Activated CD4-positive, alpha-beta memory T cell treated with anti-CD3 and anti-CD28 coated beads for 36 hours (primary cell): ENCODE measurements at regions of chr10 and their contacts with region 1.

Region 1: GRCh38 chr10:27241652-27242472 is 1.3 kb upstream of the ACBD5 start:
- DNase-seq: peak; percentile 93
- H3K4me3 Mint-ChIP-seq: peak overlapping the region; percentile 97
- H3K27ac Mint-ChIP-seq: peak overlapping the region; percentile 100
- H3K4me1 Mint-ChIP-seq: peaks cover 24% of the 10 kb centered on the region
- H3K27me3 Mint-ChIP-seq: no peaks in the 10 kb centered on the region

Region 2: GRCh38 chr10:26437637-26438461 is 804.0 kb before region 1 on chr10 and contains the start of gene APBB1IP:
- CTCF ChIA-PET with region 1: no interaction called
- POLR2A ChIA-PET with region 1: no interaction called
- intact Hi-C with region 1: loop called (anchors 5 kb)
- DNase-seq: peak; percentile 66
- H3K4me3 Mint-ChIP-seq: peak within 1 kb of the TSS; percentile 93
- H3K27ac Mint-ChIP-seq: peak within 1 kb of the TSS; percentile 92
- H3K4me1 Mint-ChIP-seq: peaks cover 51% of the 10 kb centered on the region
- H3K27me3 Mint-ChIP-seq: no peaks in the 10 kb centered on the region
- total RNA-seq, gene APBB1IP: 50.1 to 52.1 TPM

Region 3: DNA sequence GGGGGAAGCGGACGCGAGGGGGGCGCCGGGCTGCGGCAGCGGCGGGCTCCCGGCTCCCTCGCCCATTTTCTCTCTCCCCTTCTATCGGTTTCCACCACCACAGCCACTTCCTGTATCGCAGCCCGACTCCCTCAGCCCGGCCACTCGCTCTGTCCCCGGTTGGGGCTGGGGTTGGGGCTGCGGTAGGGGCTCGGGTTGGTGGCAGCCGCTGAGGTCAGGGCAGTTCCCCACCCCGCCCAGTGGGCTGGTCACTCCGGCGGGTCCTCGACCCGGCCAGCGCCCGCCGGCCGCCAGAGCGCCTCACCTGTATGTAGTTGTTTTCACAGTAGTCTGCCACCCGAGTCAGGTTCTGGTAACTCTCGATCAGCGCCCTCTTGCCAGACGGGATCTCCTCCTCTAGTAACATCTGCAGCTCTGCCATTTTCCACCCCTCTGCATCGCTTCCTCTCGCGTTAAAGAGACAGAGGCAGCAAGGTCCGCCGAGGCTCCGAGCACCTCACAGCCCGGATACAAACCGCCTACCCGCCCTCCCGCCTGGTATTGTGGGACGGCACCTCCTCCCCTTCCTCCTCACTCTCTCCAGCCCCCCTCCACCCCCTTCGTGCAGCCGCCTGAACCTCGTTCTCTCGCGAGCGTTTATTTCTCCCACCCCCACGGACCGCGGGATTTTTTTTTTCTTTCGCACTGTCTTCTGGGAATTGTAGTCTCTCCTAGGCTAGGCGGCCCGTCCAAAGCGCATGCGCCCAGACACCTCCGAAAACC is 381.2 kb before region 1 on chr10 and contains the start of gene ABI1:
- CTCF ChIA-PET with region 1: no interaction called
- POLR2A ChIA-PET with region 1: no interaction called
- intact Hi-C with region 1: loop called (anchors 1 kb)
- DNase-seq: peak; percentile 98
- H3K4me3 Mint-ChIP-seq: peak within 1 kb of the TSS; percentile 90
- H3K27ac Mint-ChIP-seq: peak within 1 kb of the TSS; percentile 96
- H3K4me1 Mint-ChIP-seq: peaks cover 26% of the 10 kb centered on the region
- H3K27me3 Mint-ChIP-seq: no peaks in the 10 kb centered on the region
- total RNA-seq, gene ABI1: 55.5 to 56.2 TPM

Region 4: GRCh38 chr10:27030060-27030459 is 211.8 kb before region 1 on chr10:
- CTCF ChIA-PET with region 1: no interaction called
- POLR2A ChIA-PET with region 1: no interaction called
- intact Hi-C with region 1: no loop called
- DNase-seq: no peak
- H3K4me3 Mint-ChIP-seq: no peak overlapping the region
- H3K27ac Mint-ChIP-seq: no peak overlapping the region
- H3K4me1 Mint-ChIP-seq: peaks cover 10% of the 10 kb centered on the region
- H3K27me3 Mint-ChIP-seq: no peaks in the 10 kb centered on the region

Region 5: DNA sequence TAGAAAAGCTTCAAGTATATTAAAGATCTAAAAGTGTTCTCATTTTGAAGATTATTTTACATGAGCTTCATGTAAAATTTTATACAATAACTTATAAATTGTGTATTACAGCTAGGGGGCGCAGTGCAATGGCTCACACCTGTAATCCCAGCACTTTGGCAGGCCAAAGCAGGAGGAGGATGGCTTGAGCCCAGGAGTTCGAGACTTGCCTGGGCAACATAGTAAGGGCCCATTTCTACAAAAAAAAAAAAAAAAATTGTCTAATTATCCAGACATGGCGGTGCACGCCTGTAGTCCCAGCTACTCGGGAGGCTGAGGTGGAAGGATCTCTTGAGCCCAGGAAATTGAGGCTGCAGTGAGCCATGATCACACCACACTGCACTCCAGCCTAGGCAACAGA is 17.9 kb before region 1 on chr10:
- CTCF ChIA-PET with region 1: interaction called, 24 read pairs
- POLR2A ChIA-PET with region 1: interaction called, 3 read pairs
- intact Hi-C with region 1: loop called (anchors 2 kb)
- DNase-seq: peak; percentile 48
- H3K4me3 Mint-ChIP-seq: no peak overlapping the region
- H3K27ac Mint-ChIP-seq: no peak overlapping the region
- H3K4me1 Mint-ChIP-seq: peaks cover 17% of the 10 kb centered on the region
- H3K27me3 Mint-ChIP-seq: no peaks in the 10 kb centered on the region

Region 6: GRCh38 chr10:27276581-27276980 is 34.7 kb after region 1 on chr10:
- CTCF ChIA-PET with region 1: no interaction called
- POLR2A ChIA-PET with region 1: no interaction called
- intact Hi-C with region 1: no loop called
- DNase-seq: no peak
- H3K4me3 Mint-ChIP-seq: no peak overlapping the region
- H3K27ac Mint-ChIP-seq: no peak overlapping the region
- H3K4me1 Mint-ChIP-seq: no peaks in the 10 kb centered on the region
- H3K27me3 Mint-ChIP-seq: peaks cover 24% of the 10 kb centered on the region

Region 7: DNA sequence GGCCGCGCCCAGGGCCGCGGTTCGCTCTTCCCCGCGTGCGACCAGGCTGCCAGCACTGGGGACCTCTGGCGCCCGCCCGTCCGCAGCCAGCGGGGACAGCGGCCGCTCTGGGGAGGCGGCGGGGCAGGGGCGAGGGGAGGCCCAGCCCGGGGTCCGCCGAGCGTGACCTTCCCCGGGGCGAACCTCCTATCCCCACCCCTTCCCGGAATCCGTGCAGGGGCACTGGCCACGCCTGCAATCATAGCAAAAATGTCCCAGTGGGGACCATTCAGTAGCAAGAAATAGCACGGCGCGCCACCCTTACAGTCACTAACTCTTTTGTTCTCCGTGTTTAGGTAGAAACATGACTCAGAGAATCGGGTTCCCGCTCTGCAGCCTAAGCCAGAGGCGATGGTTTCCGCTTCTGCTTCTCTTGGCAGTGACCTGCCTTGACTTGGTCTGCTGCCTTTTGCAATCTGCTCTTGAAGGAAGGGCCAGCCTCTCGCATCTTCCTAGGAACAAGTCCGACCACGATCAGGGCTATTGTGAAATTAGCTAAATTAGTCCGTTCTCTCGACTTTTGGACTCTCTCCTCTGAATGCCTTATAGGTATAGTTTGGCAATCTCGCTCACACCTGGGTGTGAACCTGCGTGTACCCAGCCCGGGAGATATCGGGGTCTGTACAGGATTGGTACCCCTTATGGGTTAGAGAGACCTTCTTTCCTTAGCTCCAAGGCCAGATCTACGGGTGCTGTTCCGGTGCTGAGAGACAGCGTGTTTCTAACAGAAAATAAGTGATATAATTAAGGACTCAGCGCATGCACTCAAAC is 78.1 kb after region 1 on chr10:
- CTCF ChIA-PET with region 1: no interaction called
- POLR2A ChIA-PET with region 1: no interaction called
- intact Hi-C with region 1: loop called (anchors 2 kb)
- DNase-seq: peak; percentile 43
- H3K4me3 Mint-ChIP-seq: no peak overlapping the region
- H3K27ac Mint-ChIP-seq: no peak overlapping the region
- H3K4me1 Mint-ChIP-seq: peaks cover 3% of the 10 kb centered on the region
- H3K27me3 Mint-ChIP-seq: peaks cover 12% of the 10 kb centered on the region

Region 8: DNA sequence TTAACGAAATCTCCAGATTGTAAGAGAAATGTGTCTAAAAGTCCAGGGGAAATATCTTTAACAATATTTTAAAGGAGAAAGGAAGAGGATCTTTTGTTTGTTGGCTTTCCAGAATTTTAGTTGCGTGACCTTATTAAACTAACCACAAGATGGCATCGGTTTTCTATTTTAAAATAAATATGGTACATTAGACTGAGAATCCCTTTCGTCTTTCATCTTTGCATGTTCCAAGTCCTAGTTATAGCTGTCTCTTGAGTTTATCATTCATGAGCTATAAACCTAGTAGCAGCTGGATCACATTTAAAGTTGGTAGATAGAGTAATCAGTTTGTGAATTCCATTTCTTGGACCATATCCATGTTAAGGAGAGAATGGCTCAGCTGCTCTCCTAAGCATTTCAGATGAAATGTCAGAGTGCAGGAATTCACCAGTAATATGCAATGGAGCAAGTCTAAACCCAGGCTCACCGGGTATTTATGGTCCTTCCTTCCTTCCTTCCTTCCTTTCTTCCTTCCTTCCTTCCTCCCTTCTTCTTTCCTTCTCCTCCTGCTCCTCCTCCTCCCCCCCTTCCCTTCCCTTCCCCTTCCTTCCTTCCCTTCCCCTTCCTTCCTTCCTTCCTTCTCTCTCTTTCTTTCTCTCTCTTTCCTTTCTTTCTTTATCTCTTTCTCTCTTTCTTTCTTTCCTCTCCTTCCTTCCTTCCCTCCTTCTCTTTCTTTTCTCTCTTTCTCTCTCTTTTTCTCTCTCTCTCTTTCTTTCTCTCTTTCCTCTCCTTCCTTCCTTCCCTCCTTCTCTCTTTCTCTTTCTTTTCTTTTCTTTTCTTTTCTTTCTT is 204.4 kb after region 1 on chr10:
- CTCF ChIA-PET with region 1: no interaction called
- POLR2A ChIA-PET with region 1: no interaction called
- intact Hi-C with region 1: no loop called
- DNase-seq: no peak
- H3K4me3 Mint-ChIP-seq: no peak overlapping the region
- H3K27ac Mint-ChIP-seq: no peak overlapping the region
- H3K4me1 Mint-ChIP-seq: peaks cover 9% of the 10 kb centered on the region
- H3K27me3 Mint-ChIP-seq: no peaks in the 10 kb centered on the region

Region 9: GRCh38 chr10:27490807-27491206 is 248.9 kb after region 1 on chr10:
- CTCF ChIA-PET with region 1: no interaction called
- POLR2A ChIA-PET with region 1: no interaction called
- intact Hi-C with region 1: no loop called
- DNase-seq: no peak
- H3K4me3 Mint-ChIP-seq: no peak overlapping the region
- H3K27ac Mint-ChIP-seq: no peak overlapping the region
- H3K4me1 Mint-ChIP-seq: no peaks in the 10 kb centered on the region
- H3K27me3 Mint-ChIP-seq: peaks cover 21% of the 10 kb centered on the region

Region 10: DNA sequence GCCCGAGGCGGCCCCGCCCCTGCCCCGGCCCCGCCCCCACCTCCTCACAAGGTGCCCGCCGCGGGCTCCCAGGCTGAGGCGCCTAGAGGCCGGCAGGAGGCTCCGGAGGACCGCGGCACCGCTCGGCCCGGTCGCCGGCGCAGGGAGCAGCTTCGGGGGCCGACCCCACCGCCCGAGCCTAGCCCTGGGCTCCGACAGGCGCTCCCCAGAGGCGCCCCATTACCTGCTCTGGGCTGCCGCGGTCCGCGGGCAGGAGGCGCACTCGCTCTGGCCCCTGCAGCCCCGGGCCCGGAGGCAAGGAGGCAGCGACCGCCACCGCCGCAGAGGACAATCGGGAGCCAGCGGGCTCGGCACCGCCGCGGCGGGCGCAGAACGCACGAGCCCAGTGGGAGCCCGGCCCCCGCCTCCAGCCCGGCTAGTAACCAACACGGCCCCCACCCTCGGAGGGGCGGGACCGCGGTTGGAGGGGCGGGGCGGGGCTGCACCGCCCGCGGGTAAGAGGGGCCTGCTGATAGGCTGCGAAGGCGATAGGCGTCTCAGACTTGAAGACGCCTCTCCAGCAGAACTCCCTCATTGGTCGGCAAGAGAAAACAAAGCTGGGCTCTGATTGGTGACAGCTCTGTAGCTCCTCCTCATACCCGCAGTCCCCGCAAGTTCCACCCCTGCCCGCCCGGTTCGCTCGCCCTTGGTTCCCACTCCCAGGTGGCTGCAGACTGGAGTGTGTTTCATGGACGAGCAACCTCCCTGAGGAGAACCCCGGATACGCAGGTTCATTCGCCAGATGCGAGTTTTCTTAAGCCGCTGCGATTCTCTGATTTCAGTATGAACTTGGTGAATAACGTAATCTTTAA is 1061.0 kb after region 1 on chr10 and contains the start of gene MPP7:
- CTCF ChIA-PET with region 1: no interaction called
- POLR2A ChIA-PET with region 1: no interaction called
- intact Hi-C with region 1: loop called (anchors 5 kb)
- DNase-seq: peak; percentile 97
- H3K4me3 Mint-ChIP-seq: peak within 1 kb of the TSS; percentile 90
- H3K27ac Mint-ChIP-seq: peak within 1 kb of the TSS; percentile 71
- H3K4me1 Mint-ChIP-seq: peaks cover 46% of the 10 kb centered on the region
- H3K27me3 Mint-ChIP-seq: no peaks in the 10 kb centered on the region
- total RNA-seq, gene MPP7: 11.6 to 12.8 TPM